B cell (primary cell): ENCODE measurements at regions of chr2 and their contacts with region 1.

Region 1: GRCh38 chr2:105114551-105114950 is 76.7 kb downstream of the MRPS9 start:
- DNase-seq: peak; percentile 69
- ATAC-seq: peak; percentile 43
- H3K4me3 ChIP-seq: no peak overlapping the region
- H3K4me3 Mint-ChIP-seq: no peak overlapping the region
- H3K27ac ChIP-seq: no peak overlapping the region
- H3K27ac Mint-ChIP-seq: no peak overlapping the region
- H3K4me1 ChIP-seq: no peaks in the 10 kb centered on the region
- H3K4me1 Mint-ChIP-seq: no peaks in the 10 kb centered on the region
- H3K27me3 ChIP-seq: no peaks in the 10 kb centered on the region
- H3K27me3 Mint-ChIP-seq: no peaks in the 10 kb centered on the region
- CTCF ChIP-seq: peak; percentile 95

Region 2: GRCh38 chr2:105102963-105103421 is 11.6 kb before region 1 on chr2:
- CTCF ChIA-PET with region 1: interaction called, 29 read pairs
- POLR2A ChIA-PET with region 1: no interaction called
- intact Hi-C with region 1: no loop called
- DNase-seq: no peak
- ATAC-seq: no peak
- H3K4me3 ChIP-seq: no peak overlapping the region
- H3K4me3 Mint-ChIP-seq: no peak overlapping the region
- H3K27ac ChIP-seq: no peak overlapping the region
- H3K27ac Mint-ChIP-seq: no peak overlapping the region
- H3K4me1 ChIP-seq: peaks cover 0 to 3% of the 10 kb centered on the region in 2 donors
- H3K4me1 Mint-ChIP-seq: peaks cover 6% of the 10 kb centered on the region
- H3K27me3 ChIP-seq: no peaks in the 10 kb centered on the region
- H3K27me3 Mint-ChIP-seq: no peaks in the 10 kb centered on the region
- CTCF ChIP-seq: no peak

Region 3: GRCh38 chr2:105134081-105134480 is 19.5 kb after region 1 on chr2:
- CTCF ChIA-PET with region 1: interaction called, 12 read pairs
- POLR2A ChIA-PET with region 1: no interaction called
- intact Hi-C with region 1: no loop called
- DNase-seq: no peak
- ATAC-seq: no peak
- H3K4me3 ChIP-seq: no peak overlapping the region
- H3K4me3 Mint-ChIP-seq: no peak overlapping the region
- H3K27ac ChIP-seq: no peak overlapping the region
- H3K27ac Mint-ChIP-seq: no peak overlapping the region
- H3K4me1 ChIP-seq: peaks cover 13 to 16% of the 10 kb centered on the region in 2 donors
- H3K4me1 Mint-ChIP-seq: peaks cover 16% of the 10 kb centered on the region
- H3K27me3 ChIP-seq: no peaks in the 10 kb centered on the region
- H3K27me3 Mint-ChIP-seq: peaks cover 7% of the 10 kb centered on the region
- CTCF ChIP-seq: no peak

Region 4: DNA sequence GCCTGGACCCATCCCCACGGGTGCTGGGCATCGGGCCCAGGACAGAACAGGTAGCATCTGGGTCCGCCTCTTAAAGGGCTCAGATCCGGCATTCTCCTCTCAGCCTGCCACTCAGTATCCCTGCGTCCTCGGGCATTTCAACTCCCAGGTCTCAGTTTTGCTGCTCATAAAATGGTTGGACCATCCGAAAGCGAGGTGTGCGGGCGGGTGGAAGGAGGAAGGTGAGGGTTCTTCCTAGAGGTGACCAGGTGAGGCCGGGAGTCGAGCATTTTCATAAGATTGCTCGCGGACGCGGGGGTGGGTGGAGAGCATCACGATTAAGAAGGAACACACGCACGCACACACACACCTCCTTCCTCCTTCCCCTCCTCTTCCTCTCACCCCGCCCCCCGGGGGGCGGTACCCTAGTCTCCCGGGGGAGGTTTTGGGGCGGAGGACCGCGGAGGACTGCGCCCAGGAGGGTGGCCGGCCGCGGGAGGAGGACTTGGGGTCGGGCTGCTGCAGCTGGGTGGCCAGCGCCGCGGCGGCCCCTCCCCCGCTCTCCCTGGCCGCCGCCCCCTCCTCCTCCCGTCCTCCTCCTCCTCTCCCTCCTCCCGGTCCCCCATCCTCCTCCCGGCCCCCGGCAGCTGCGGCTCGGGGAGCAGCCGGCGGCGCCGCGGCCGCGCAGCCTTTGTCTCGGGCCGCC is 29.1 kb after region 1 on chr2:
- CTCF ChIA-PET with region 1: interaction called, 32 read pairs
- POLR2A ChIA-PET with region 1: no interaction called
- intact Hi-C with region 1: no loop called
- DNase-seq: peak; percentile 70
- ATAC-seq: peak; percentile 91
- H3K4me3 ChIP-seq: peak overlapping the region in 4 of 5 experiments; percentile 48 to 78 (median 68)
- H3K4me3 Mint-ChIP-seq: peak overlapping the region; percentile 94
- H3K27ac ChIP-seq: peak overlapping the region; percentile 15 to 27
- H3K27ac Mint-ChIP-seq: peak overlapping the region; percentile 89
- H3K4me1 ChIP-seq: peaks cover 17 to 24% of the 10 kb centered on the region in 2 donors
- H3K4me1 Mint-ChIP-seq: peaks cover 30% of the 10 kb centered on the region
- H3K27me3 ChIP-seq: peaks cover 0 to 7% (median 0%) of the 10 kb centered on the region in 4 experiments
- H3K27me3 Mint-ChIP-seq: no peaks in the 10 kb centered on the region
- CTCF ChIP-seq: no peak

Region 5: DNA sequence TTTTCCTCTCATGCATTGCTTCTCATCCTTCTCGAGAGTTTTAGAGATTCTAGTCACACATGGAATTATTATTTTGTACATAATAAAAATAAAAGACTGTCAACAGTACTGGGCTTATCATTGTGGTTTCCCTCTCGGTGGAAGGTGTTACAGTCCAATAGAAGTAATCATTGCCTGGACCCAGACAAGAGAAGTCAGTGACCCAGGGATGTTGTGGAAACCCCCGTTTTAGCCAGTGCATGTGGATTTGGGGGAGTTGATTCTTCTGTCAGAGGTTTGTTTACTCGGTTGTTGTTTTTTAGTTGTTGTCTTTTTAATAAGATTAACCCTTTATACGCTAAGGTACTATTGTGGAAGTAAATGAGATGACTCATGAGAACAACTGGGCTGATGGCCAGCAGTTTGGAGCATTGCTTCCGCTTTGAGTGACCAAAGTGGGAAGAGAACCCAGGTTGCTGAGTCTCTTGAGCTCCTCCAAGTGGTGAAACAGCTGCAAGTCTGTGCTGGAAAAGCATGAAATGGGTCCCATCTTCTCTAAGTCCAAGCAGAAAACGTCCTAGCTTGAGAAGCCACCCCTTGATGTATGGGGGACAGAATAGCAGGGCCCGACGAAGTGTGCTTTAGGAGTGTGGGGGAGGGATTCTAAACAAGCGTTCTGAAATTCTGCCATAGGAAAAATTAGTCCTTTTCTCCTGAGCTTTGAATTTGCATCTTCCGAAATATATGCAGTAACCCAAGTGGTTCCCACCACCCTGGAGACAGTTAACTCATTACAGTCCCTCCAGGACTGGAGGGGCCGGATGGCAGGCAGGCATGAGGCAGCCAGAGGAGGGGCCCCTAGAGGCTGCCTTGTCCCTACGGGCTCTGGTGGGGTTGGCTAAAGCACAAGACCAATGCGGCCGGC is 65.2 kb after region 1 on chr2:
- CTCF ChIA-PET with region 1: interaction called, 89 read pairs
- POLR2A ChIA-PET with region 1: interaction called, 7 read pairs
- intact Hi-C with region 1: loop called (anchors 1 kb)
- DNase-seq: no peak
- ATAC-seq: no peak
- H3K4me3 ChIP-seq: no peak overlapping the region
- H3K4me3 Mint-ChIP-seq: no peak overlapping the region
- H3K27ac ChIP-seq: no peak overlapping the region
- H3K27ac Mint-ChIP-seq: peak overlapping the region; percentile 41
- H3K4me1 ChIP-seq: peaks cover 52 to 66% of the 10 kb centered on the region in 2 donors
- H3K4me1 Mint-ChIP-seq: peaks cover 75% of the 10 kb centered on the region
- H3K27me3 ChIP-seq: no peaks in the 10 kb centered on the region
- H3K27me3 Mint-ChIP-seq: no peaks in the 10 kb centered on the region
- CTCF ChIP-seq: no peak

Region 6: DNA sequence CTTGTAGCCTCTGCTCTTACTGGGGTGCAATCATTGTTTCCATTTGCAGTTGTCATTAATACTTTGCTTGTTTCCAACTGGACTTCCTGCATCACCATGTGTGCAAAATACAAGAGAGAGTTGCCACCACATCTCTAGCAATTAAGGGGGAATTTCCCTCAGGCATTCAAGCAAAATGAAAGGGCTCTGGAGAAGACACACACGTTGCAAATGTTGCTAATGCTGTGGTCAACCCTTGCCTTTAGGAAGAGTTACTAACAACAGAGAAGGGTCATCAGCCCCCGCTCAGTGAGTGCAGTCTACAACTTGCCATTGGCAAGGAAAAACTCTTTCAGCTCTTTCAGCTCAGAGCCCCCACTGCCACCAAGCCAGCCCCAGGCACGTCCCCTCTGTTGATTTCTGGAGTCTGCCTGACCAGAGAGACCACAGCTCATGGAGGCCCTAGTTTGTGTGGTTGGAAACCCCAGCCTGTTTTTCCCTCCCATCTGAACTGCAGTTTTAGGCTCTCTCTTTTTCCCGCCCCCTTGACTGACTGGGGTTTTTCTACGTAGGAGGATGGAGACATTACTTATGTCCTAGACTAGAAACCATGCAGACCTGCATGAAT is 101.1 kb after region 1 on chr2:
- CTCF ChIA-PET with region 1: interaction called, 17 read pairs
- POLR2A ChIA-PET with region 1: no interaction called
- intact Hi-C with region 1: no loop called
- DNase-seq: no peak
- ATAC-seq: no peak
- H3K4me3 ChIP-seq: no peak overlapping the region
- H3K4me3 Mint-ChIP-seq: no peak overlapping the region
- H3K27ac ChIP-seq: no peak overlapping the region
- H3K27ac Mint-ChIP-seq: no peak overlapping the region
- H3K4me1 ChIP-seq: no peaks in the 10 kb centered on the region
- H3K4me1 Mint-ChIP-seq: peaks cover 4% of the 10 kb centered on the region
- H3K27me3 ChIP-seq: no peaks in the 10 kb centered on the region
- H3K27me3 Mint-ChIP-seq: peaks cover 6% of the 10 kb centered on the region
- CTCF ChIP-seq: no peak

Region 7: GRCh38 chr2:105235388-105236054 is 121.0 kb after region 1 on chr2:
- CTCF ChIA-PET with region 1: interaction called, 643 read pairs
- POLR2A ChIA-PET with region 1: no interaction called
- intact Hi-C with region 1: loop called (anchors 1 kb)
- DNase-seq: peak; percentile 81
- ATAC-seq: peak; percentile 68
- H3K4me3 ChIP-seq: no peak overlapping the region
- H3K4me3 Mint-ChIP-seq: no peak overlapping the region
- H3K27ac ChIP-seq: no peak overlapping the region
- H3K27ac Mint-ChIP-seq: no peak overlapping the region
- H3K4me1 ChIP-seq: peaks cover 10 to 12% of the 10 kb centered on the region in 2 donors
- H3K4me1 Mint-ChIP-seq: peaks cover 24% of the 10 kb centered on the region
- H3K27me3 ChIP-seq: no peaks in the 10 kb centered on the region
- H3K27me3 Mint-ChIP-seq: no peaks in the 10 kb centered on the region
- CTCF ChIP-seq: peak; percentile 93